ENCODE measurements at regions of chr7 and their contacts with region 1.

Region 1: GRCh38 chr7:139811066-139811465 is 18.0 kb upstream of the TBXAS1 start:
- DNase-seq: no peak
- ATAC-seq: no peak
- H3K4me3 ChIP-seq: no peak overlapping the region
- H3K27ac ChIP-seq: no peak overlapping the region
- H3K4me1 ChIP-seq: peaks cover 0 to 3% (median 0%) of the 10 kb centered on the region in 9 donors
- H3K27me3 ChIP-seq: no peaks in the 10 kb centered on the region
- CTCF ChIP-seq: no peak

Region 2: DNA sequence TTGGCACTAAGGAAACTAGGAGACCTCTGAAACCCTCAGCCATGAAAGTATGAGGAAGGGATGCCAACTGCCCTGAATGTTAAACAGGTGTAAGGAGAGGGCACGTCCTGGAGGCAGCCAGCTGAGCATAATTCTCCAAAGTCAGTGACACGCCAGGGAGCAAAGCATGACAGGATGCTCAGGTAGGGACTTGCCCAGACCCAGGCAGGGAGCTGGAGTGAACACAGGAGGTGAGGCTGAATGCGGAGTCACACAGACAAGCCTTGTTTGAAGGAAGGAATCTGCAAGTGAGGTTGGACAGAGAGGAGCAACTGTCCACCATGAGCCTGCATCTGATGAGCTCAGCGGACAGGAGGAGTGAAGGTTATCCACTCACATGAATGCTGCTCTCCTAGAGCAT is 369.1 kb before region 1 on chr7:
- intact Hi-C with region 1: loop called in 1 of 10 experiments (anchors 10 kb)
- DNase-seq: no peak
- ATAC-seq: no peak
- H3K4me3 ChIP-seq: no peak overlapping the region
- H3K27ac ChIP-seq: no peak overlapping the region
- H3K4me1 ChIP-seq: no peaks in the 10 kb centered on the region
- H3K27me3 ChIP-seq: no peaks in the 10 kb centered on the region
- CTCF ChIP-seq: no peak

Region 3: GRCh38 chr7:139875821-139876241 is 64.8 kb after region 1 on chr7:
- intact Hi-C with region 1: loop called in 1 of 10 experiments (anchors 10 kb)
- DNase-seq: no peak
- ATAC-seq: peak; percentile 42 to 90 (median 68)
- H3K4me3 ChIP-seq: no peak overlapping the region
- H3K27ac ChIP-seq: peak overlapping the region in 2 of 10 donors; percentile 2
- H3K4me1 ChIP-seq: peaks cover 0 to 54% (median 27%) of the 10 kb centered on the region in 9 donors
- H3K27me3 ChIP-seq: no peaks in the 10 kb centered on the region
- CTCF ChIP-seq: no peak